ENCODE measurements at regions of chr20 and their contacts with region 1.

Region 1: GRCh38 chr20:32652739-32653526 is 20.8 kb downstream of the C20orf203 start:
- DNase-seq: peak; percentile 89
- ATAC-seq: peak; percentile 99
- H3K4me3 Mint-ChIP-seq: no peak overlapping the region
- H3K27ac Mint-ChIP-seq: no peak overlapping the region
- H3K4me1 Mint-ChIP-seq: peaks cover 11% of the 10 kb centered on the region
- H3K27me3 Mint-ChIP-seq: no peaks in the 10 kb centered on the region

Region 2: GRCh38 chr20:32474967-32475811 is 177.7 kb before region 1 on chr20:
- CTCF ChIA-PET with region 1: no interaction called
- DNase-seq: no peak
- ATAC-seq: no peak
- H3K4me3 Mint-ChIP-seq: no peak overlapping the region
- H3K27ac Mint-ChIP-seq: no peak overlapping the region
- H3K4me1 Mint-ChIP-seq: no peaks in the 10 kb centered on the region
- H3K27me3 Mint-ChIP-seq: no peaks in the 10 kb centered on the region

Region 3: DNA sequence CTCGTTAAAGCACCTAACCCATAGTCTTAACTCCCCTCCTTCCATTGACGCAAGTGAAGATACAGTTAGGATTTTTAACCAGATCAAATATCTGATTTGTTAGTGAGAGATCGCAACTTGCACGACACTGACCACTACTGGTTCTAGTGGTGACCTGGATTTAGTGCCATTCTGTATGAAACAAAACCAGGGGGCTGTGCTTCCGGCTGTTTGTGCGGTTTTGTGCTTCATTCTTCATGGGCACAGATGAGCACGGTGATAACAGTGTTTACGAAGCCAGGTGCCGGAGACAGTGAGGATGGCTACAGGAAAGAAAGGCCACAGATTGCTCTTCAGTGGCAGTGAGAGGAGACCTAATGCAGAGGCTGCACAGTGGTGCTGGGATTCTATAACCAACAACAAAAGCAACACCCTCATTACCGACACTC is 143.3 kb before region 1 on chr20:
- CTCF ChIA-PET with region 1: interaction called, 15 read pairs
- DNase-seq: peak; percentile 78
- ATAC-seq: peak; percentile 74
- H3K4me3 Mint-ChIP-seq: peak overlapping the region; percentile 29
- H3K27ac Mint-ChIP-seq: peak overlapping the region; percentile 62
- H3K4me1 Mint-ChIP-seq: peaks cover 29% of the 10 kb centered on the region
- H3K27me3 Mint-ChIP-seq: no peaks in the 10 kb centered on the region

Region 4: DNA sequence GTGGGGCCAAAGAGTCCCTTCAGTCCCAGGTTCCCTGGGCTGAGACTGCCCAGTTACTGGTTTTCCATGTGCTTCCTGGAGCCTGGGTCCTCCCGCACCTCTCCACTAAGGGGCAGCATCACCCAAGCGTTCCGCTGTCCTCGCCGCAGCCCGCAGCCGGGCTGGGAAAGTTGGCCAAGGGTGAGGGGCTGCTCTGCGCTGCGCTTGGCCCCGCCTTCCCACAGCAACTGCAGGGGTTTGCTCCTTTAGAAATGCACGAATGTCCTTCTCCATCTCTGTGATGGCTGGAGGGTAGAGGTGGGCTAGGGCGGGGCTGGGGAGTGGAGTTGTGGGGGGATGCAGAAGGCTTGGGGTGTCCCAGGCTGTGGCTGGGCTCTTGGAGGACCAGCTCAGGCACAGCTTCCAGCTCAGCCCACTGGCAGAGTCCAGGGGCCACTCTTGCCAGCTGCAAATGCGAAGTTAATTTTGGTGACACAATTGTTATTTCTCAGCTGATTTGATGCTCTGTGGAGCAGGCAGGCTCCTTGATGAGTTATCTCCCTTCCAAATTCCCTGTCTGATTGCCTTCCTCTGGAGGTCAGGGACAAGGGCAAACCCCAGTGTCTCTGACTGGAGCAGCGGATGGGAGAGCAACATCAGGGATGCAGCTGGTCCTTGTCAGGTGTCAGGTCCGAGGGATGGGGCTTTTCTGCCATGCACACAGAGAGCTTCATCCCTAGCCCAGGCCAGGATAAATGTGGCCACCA is 131.0 kb before region 1 on chr20:
- CTCF ChIA-PET with region 1: interaction called, 175 read pairs
- DNase-seq: peak; percentile 70
- ATAC-seq: peak; percentile 88
- H3K4me3 Mint-ChIP-seq: no peak overlapping the region
- H3K27ac Mint-ChIP-seq: peak overlapping the region; percentile 59
- H3K4me1 Mint-ChIP-seq: peaks cover 52% of the 10 kb centered on the region
- H3K27me3 Mint-ChIP-seq: no peaks in the 10 kb centered on the region

Region 5: DNA sequence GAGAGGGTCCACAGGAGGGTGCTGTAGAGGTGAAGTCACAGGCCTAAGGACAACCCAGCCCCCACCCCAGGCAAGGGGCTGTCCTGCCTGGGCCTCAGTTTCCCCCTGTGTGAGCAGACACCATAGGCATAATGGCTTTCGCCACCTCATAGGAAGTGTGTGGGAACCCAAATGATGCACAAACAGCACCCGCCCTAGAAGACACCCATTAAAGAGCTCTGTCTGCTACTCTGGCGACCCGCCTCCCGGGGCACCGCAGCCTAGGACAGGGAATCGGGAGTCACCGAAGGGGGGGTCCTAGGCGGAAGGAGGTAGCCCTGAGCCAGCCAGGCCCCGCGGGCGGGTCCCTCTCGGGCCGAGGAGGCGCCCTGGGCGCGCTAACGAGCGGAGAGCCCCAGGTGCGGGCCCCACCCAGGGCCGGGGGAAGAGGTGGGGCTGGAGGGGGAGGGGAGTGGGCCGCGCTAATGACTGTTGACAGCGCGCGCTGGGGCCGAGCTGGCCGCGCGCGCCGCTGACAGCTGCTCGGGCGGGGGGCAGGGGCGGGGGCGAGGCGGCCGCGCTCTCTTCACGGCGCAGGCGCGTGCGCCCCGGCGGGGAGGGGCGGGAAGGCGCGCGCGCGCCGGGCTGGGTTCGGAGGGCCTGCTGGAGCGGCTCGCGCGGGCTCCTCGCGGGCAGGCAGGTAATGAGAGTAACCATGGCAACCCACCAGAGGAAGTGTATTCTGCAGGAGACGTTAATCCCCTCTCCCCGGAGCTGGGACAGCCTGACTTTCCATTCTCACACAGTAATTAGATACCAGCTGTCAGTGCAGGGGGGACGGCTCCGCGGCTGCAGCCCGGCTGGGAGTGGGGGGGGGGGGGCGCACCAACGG is 116.7 kb before region 1 on chr20:
- CTCF ChIA-PET with region 1: interaction called, 40 read pairs
- DNase-seq: peak; percentile 92
- ATAC-seq: peak; percentile 66
- H3K4me3 Mint-ChIP-seq: peak overlapping the region; percentile 89
- H3K27ac Mint-ChIP-seq: peak overlapping the region; percentile 96
- H3K4me1 Mint-ChIP-seq: peaks cover 70% of the 10 kb centered on the region
- H3K27me3 Mint-ChIP-seq: no peaks in the 10 kb centered on the region

Region 6: DNA sequence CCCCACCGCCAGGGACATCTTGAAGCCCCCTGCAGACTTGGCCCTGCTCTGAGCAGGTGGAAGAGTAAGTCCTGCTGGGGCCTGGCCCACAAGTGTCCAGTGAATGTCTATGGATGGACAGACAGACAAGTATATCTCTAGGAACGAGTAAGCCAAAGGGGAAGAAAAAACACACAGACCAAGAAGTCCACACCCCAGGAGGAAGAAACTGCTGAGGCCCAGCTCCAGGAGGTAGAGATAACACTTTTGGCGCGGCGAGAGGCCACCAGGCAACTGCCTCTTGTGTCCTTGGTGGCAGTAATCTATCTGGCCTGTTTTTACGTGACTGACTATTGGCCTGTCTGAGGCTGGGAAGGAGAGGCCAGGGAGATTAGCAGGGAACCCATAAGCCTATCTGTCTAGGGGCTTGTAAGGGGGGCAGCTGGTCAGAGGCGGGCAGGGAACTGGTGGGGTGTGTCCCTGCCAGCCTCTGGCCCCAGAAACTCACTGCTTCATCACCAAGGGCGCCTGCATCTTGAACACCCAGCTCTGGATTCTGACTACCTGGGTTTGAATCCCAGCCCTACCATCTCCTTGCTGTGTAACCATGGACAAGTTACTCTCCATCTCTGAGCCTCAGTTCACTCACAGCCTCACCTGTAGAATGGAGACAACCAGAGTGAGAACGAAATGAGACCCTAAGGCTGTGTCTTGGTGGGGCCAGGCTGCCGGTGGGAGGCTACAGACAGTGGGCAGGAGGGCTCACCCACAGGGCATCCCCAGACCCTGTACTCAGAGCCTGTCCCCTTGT is 10.5 kb before region 1 on chr20:
- CTCF ChIA-PET with region 1: interaction called, 10 read pairs
- DNase-seq: no peak
- ATAC-seq: no peak
- H3K4me3 Mint-ChIP-seq: no peak overlapping the region
- H3K27ac Mint-ChIP-seq: no peak overlapping the region
- H3K4me1 Mint-ChIP-seq: no peaks in the 10 kb centered on the region
- H3K27me3 Mint-ChIP-seq: no peaks in the 10 kb centered on the region

Measured in activated CD8-positive, alpha-beta memory T cell treated with anti-CD3 and anti-CD28 coated beads, Interleukin-2, amount 10 ng/mL, durations not matched to agents 7 days and 5 days (primary cell).